Naive thymus-derived CD4-positive, alpha-beta T cell (primary cell): ENCODE measurements at regions of chr5 and their contacts with region 1.

Region 1: GRCh38 chr5:57450991-57451876 is 31.4 kb downstream of the ACTBL2 start:
- DNase-seq: peak in 6 of 9 donors; percentile 14 to 59 (median 53)
- ATAC-seq: peak; percentile 55
- H3K4me3 ChIP-seq: no peak overlapping the region
- H3K4me3 Mint-ChIP-seq: peak overlapping the region in 6 of 10 donors; percentile 2 to 51 (median 22)
- H3K27ac ChIP-seq: no peak overlapping the region
- H3K27ac Mint-ChIP-seq: peak overlapping the region in 8 of 9 donors; percentile 34 to 83 (median 66)
- H3K4me1 ChIP-seq: peaks cover 0 to 18% of the 10 kb centered on the region in 2 donors
- H3K4me1 Mint-ChIP-seq: peaks cover 0 to 35% (median 20%) of the 10 kb centered on the region in 7 donors
- H3K27me3 ChIP-seq: no peaks in the 10 kb centered on the region
- H3K27me3 Mint-ChIP-seq: no peaks in the 10 kb centered on the region

Region 2: GRCh38 chr5:57494104-57495098 is 43.2 kb after region 1 on chr5:
- CTCF ChIA-PET with region 1: no interaction called
- POLR2A ChIA-PET with region 1: interaction called, 4 read pairs
- intact Hi-C with region 1: loop called in 1 of 2 experiments (anchors 2 kb)
- DNase-seq: peak in 1 of 9 donors; percentile 28
- ATAC-seq: no peak
- H3K4me3 ChIP-seq: no peak overlapping the region
- H3K4me3 Mint-ChIP-seq: peak overlapping the region in 9 of 10 donors; percentile 41 to 79 (median 69)
- H3K27ac ChIP-seq: peak overlapping the region; percentile 50
- H3K27ac Mint-ChIP-seq: peak overlapping the region; percentile 80 to 96 (median 93)
- H3K4me1 ChIP-seq: peaks cover 0 to 26% of the 10 kb centered on the region in 2 donors
- H3K4me1 Mint-ChIP-seq: peaks cover 28 to 58% (median 45%) of the 10 kb centered on the region in 7 donors
- H3K27me3 ChIP-seq: no peaks in the 10 kb centered on the region
- H3K27me3 Mint-ChIP-seq: no peaks in the 10 kb centered on the region

Region 3: DNA sequence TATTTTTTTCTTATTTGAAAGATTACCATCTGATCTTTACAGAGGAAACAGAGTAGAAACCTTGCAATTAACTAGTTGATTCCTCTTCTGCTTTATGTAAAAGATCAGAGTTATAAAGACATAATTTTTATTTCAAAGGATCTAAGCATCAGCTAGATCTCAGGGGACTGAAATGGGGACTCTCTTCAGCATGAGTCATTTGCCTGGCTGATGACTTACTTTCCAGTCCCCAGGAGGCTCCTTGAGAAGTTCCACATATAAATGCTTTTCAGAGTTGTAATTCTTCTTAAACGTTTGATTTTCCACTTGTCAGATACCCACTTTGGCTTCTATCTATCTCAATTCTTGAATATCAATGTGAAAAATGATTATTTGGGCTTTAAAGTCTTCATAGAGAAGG is 1521.1 kb after region 1 on chr5:
- CTCF ChIA-PET with region 1: no interaction called
- POLR2A ChIA-PET with region 1: no interaction called
- intact Hi-C with region 1: no loop called
- DNase-seq: no peak
- ATAC-seq: no peak
- H3K4me3 ChIP-seq: no peak overlapping the region
- H3K4me3 Mint-ChIP-seq: no peak overlapping the region
- H3K27ac ChIP-seq: no peak overlapping the region
- H3K27ac Mint-ChIP-seq: peak overlapping the region in 2 of 9 donors; percentile 25
- H3K4me1 ChIP-seq: no peaks in the 10 kb centered on the region
- H3K4me1 Mint-ChIP-seq: peaks cover 0 to 15% (median 0%) of the 10 kb centered on the region in 7 donors
- H3K27me3 ChIP-seq: no peaks in the 10 kb centered on the region
- H3K27me3 Mint-ChIP-seq: no peaks in the 10 kb centered on the region